ENCODE measurements at regions of chr1 and their contacts with region 1.

Region 1: GRCh38 chr1:2642560-2643413 is 10.0 kb upstream of the MMEL1 start:
- DNase-seq: peak; percentile 92 to 96
- ATAC-seq: peak; percentile 81 to 96 (median 92)
- H3K4me3 ChIP-seq: peak overlapping the region; percentile 72 to 98 (median 90)
- H3K27ac ChIP-seq: peak overlapping the region; percentile 20 to 98 (median 90)
- H3K4me1 ChIP-seq: peaks cover 8 to 21% (median 18%) of the 10 kb centered on the region in 9 donors
- H3K27me3 ChIP-seq: no peaks in the 10 kb centered on the region
- CTCF ChIP-seq: peak in 6 of 9 donors; percentile 11 to 51 (median 32)

Region 2: DNA sequence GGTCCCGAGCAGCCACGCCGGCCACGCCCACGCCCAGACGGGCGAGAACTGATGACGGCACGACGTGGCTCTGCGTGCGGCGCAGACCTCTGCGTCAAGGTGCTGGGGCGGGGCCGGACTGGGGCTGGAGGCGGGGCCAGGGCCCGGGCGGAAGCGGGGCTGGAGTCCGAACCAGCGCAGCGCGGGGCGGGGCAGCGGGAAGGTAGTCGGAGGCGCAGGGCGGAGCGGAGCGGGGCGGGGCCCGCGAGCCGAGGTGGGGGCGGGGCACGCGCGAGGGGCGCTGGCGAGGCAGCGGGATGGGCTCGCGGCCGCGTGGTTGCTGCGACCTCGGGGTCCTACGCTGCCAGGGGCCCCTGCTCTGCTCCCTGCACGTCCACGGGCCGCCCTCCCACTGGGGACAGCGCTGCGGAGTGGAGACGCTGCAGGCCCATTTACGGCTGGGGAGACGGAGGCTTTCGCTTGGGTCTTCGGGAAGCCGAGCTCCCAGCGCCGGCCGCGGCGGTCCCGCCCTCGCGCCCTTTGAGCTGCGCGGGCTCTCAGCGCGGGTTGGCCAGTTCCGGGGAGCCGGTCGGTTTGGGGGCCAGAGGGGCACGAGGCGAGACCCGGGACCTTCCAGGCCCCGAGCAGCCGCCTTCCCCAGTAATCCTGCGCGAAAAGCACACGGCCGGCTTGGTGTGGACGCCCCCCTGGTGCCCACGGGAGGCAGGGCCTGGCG is 230.1 kb before region 1 on chr1 and contains the start of gene PEX10:
- intact Hi-C with region 1: loop called in 4 of 10 experiments (anchors 2 to 10 kb)
- DNase-seq: peak; percentile 96 to 99
- ATAC-seq: peak; percentile 94 to 96 (median 94)
- H3K4me3 ChIP-seq: peak within 1 kb of the TSS; percentile 74 to 99 (median 86)
- H3K27ac ChIP-seq: peak within 1 kb of the TSS; percentile 76 to 93 (median 90)
- H3K4me1 ChIP-seq: peaks cover 3 to 37% (median 25%) of the 10 kb centered on the region in 9 donors
- H3K27me3 ChIP-seq: peaks cover 0 to 27% (median 20%) of the 10 kb centered on the region in 7 donors
- CTCF ChIP-seq: no peak
- total RNA-seq, gene PEX10: 14.6 to 26.0 (median 18.6) TPM

Region 3: DNA sequence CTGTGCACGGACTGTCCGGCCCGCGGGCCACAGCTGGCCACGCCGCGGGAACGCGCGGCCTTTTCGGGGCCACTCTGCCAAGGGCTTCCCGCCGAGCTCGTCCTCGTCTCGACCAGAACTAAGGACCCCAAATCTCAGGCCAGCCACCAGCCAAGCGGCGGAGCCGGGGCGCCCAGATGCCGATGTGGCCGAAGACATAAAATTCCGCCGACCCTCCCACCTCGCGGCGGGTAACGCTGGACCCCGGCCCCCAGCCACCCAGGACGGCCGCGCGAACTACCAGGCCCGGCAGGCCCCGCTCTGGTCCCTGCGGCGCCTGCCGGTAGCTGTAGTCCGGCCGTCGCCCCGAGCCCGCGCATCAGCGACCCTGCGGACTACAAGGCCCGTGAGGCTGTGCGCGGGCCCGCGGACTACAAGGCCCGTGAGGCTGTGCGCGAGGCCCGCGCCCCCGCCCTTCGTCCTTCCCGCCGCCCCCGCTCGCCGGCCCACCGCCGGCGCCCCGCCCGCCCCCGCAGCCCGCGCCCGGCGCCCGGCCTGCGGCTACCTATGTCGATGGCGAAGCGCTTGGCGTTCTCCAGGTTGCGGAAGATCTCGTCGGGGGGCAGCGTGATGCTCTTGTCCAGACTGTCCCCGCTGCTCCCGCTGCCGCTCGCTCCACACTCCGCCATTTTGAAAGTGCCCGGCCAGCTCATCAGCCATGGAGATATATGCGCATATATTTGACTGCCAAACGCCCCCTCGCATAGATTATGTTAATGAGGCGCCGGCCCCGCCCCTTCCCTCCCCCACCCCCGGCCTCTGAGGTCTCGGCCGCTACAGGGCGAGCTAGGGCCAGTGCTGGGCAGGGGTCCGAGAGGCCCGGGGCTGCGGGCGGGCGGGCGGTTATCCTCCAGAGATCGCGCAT is 116.6 kb before region 1 on chr1 and contains the start of gene PANK4:
- intact Hi-C with region 1: loop called in 2 of 10 experiments (anchors 10 kb)
- DNase-seq: peak; percentile 93
- ATAC-seq: peak; percentile 83 to 92 (median 89)
- H3K4me3 ChIP-seq: peak within 1 kb of the TSS; percentile 64 to 100 (median 90)
- H3K27ac ChIP-seq: peak within 1 kb of the TSS; percentile 75 to 94 (median 84)
- H3K4me1 ChIP-seq: peaks cover 39 to 72% (median 69%) of the 10 kb centered on the region in 9 donors
- H3K27me3 ChIP-seq: peaks cover 0 to 41% (median 4%) of the 10 kb centered on the region in 7 donors
- CTCF ChIP-seq: peak in 5 of 9 donors; percentile 8 to 39 (median 25)
- total RNA-seq, gene PANK4: 29.8 to 56.4 (median 35.2) TPM

Region 4: DNA sequence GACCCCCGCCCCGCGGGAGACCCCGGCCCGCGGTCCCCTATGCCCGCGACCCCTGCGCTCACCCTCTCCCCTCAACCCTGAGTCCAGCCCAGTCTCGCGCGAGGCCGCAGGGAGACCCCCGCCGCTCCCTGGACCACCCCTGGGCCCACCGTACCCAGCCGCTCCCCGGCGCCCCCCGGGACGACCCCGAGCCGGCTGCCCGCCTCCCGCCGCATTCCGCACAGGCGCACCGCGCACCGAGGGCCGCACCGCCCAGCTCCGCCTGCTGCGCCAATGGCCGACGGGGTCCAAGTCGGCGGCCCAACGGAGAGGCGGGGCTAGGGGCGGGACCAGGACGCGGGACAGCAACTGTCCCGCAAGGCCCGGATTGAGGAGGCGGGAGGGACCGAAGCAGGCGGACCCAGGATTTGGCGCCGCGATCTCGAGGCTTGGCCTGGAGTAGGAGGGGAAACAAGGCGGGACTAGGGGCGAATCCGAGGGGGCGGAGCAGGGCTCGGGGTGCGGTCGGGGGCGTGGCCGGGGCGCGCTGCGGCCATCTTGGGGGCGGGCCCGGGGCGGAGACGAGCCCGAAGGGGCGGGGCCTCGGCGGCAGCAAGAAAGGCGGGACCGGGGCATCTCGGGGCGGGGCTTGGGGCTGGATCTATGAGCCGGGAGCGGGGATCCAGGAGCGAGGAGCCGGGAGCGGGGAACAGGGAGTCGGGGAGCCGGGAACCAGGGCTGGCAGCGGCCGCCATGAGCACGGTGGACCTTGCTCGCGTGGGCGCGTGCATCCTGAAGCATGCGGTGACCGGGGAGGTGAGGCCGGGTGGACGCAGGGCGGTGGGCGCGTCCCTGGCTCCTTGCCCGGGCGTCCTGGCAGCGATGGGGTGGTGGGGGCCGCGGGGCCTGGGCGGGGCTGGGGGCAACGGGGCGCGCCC is 56.4 kb before region 1 on chr1 and contains the start of gene PRXL2B:
- intact Hi-C with region 1: loop called in 4 of 10 experiments (anchors 5 to 10 kb)
- DNase-seq: peak; percentile 99 to 100
- ATAC-seq: peak; percentile 92 to 96 (median 94)
- H3K4me3 ChIP-seq: peak within 1 kb of the TSS; percentile 51 to 98 (median 93)
- H3K27ac ChIP-seq: peak within 1 kb of the TSS; percentile 96 to 100 (median 98)
- H3K4me1 ChIP-seq: peaks cover 9 to 36% (median 25%) of the 10 kb centered on the region in 9 donors
- H3K27me3 ChIP-seq: no peaks in the 10 kb centered on the region
- CTCF ChIP-seq: no peak
- total RNA-seq, gene PRXL2B: 3.7 to 10.3 (median 5.3) TPM

Region 5: GRCh38 chr1:2821966-2822620 is 179.3 kb after region 1 on chr1:
- intact Hi-C with region 1: no loop called
- DNase-seq: peak; percentile 32 to 62
- ATAC-seq: peak; percentile 62 to 82 (median 78)
- H3K4me3 ChIP-seq: no peak overlapping the region
- H3K27ac ChIP-seq: no peak overlapping the region
- H3K4me1 ChIP-seq: no peaks in the 10 kb centered on the region
- H3K27me3 ChIP-seq: peaks cover 0 to 46% (median 16%) of the 10 kb centered on the region in 7 donors
- CTCF ChIP-seq: peak; percentile 56 to 75 (median 65)

Measured in heart right ventricle (tissue), 16 donors.